Activated naive CD4-positive, alpha-beta T cell treated with anti-CD3 and anti-CD28 coated beads for 36 hours (primary cell): ENCODE measurements at regions of chr1 and their contacts with region 1.

Region 1: DNA sequence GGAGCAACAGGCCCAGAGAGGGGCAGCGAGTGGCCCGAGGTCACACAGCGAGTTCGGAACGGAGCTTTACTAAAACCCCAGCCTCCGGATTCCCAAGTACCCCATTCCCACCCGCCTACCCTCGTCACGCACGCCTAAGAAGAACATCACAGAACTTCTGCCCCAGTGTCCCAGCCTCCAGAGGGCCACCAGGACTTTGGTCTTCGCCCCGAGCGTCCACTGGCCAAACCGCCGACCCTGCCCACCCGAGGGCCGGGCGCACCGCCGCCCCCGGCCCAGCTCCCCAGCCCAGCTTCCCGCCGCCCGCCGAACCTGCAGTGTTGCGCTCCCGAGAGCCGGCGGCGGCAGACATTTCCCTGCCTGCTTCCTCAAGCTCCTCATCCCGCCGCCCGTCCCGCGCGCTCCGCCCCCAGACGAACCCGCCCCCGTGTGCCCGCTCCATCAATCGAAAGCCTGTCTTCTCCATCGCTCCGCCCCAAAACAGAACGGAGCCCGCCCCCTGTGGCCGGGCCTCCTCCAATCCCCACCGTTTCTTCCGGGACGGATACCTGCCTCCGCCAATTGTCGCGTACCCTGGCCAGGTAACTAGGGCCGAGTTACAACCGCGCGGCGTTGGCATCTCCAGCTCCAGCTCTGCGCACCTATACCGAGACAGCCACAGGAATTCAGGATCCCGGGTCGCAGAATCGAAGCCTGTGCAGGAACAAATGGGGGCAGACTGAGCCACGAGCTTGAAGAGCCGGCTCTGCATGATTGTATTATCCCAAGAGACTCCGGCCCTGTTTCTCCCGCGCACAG is 15.3 kb downstream of the INPP5B start:
- DNase-seq: peak; percentile 99
- H3K4me3 Mint-ChIP-seq: peak overlapping the region; percentile 93
- H3K27ac Mint-ChIP-seq: peak overlapping the region; percentile 65
- H3K4me1 Mint-ChIP-seq: peaks cover 46% of the 10 kb centered on the region
- H3K27me3 Mint-ChIP-seq: no peaks in the 10 kb centered on the region

Region 2: DNA sequence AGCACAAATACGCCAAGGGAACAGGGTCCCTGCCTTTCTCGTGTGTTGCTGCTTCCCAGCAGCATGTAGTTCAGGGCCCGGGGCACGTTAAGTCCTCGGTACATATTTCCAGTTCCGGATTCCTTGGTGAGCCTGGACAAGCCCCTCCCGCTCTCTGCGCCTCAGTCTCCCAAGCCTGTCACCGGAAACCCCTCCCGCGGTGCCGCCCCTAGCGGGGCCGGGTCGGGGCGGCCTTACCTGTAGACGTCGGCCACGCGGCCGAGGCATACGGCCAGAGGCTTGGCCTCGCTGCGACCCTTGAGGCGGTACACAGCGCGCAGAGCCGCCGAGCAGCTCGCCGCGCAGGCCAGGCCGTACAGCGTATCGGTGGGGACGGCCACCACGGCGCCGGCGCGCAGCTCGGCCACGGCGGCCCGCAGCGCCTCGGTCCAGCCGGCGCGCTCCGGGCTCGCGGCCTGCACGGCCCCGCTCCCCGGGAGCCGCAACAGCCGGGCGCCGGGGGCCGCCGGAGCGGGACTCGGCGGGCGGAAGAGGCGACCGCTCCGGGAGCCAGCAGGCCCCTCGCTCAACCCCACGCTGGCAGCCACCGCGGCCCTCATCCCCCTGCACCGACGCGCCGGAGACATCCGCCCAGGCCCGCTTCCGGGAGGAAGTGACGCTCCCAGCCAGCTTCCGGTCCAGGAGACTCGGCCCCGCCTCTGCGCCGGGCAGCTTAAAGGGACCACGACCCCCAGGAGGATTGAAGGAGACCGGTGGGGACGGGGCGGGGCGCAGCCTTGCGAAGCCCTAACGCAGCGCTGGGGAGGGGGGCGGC is 123.8 kb before region 1 on chr1 and contains the starts of genes C1orf122 and YRDC:
- CTCF ChIA-PET with region 1: no interaction called
- intact Hi-C with region 1: loop called (anchors 5 kb)
- DNase-seq: peak; percentile 92
- H3K4me3 Mint-ChIP-seq: peak within 1 kb of the TSS; percentile 95
- H3K27ac Mint-ChIP-seq: peak within 1 kb of the TSS; percentile 93
- H3K4me1 Mint-ChIP-seq: peaks cover 40% of the 10 kb centered on the region
- H3K27me3 Mint-ChIP-seq: no peaks in the 10 kb centered on the region
- total RNA-seq, gene C1orf122: 12.8 to 14.2 TPM
- total RNA-seq, gene YRDC: 31.6 to 31.7 TPM

Region 3: GRCh38 chr1:37946703-37947360 is 15.3 kb after region 1 on chr1 and contains the start of gene INPP5B:
- CTCF ChIA-PET with region 1: no interaction called
- intact Hi-C with region 1: loop called (anchors 2 kb)
- DNase-seq: peak; percentile 91
- H3K4me3 Mint-ChIP-seq: peak within 1 kb of the TSS; percentile 96
- H3K27ac Mint-ChIP-seq: peak within 1 kb of the TSS; percentile 96
- H3K4me1 Mint-ChIP-seq: peaks cover 14% of the 10 kb centered on the region
- H3K27me3 Mint-ChIP-seq: no peaks in the 10 kb centered on the region
- total RNA-seq, gene INPP5B: 30.4 to 31.2 TPM

Region 4: DNA sequence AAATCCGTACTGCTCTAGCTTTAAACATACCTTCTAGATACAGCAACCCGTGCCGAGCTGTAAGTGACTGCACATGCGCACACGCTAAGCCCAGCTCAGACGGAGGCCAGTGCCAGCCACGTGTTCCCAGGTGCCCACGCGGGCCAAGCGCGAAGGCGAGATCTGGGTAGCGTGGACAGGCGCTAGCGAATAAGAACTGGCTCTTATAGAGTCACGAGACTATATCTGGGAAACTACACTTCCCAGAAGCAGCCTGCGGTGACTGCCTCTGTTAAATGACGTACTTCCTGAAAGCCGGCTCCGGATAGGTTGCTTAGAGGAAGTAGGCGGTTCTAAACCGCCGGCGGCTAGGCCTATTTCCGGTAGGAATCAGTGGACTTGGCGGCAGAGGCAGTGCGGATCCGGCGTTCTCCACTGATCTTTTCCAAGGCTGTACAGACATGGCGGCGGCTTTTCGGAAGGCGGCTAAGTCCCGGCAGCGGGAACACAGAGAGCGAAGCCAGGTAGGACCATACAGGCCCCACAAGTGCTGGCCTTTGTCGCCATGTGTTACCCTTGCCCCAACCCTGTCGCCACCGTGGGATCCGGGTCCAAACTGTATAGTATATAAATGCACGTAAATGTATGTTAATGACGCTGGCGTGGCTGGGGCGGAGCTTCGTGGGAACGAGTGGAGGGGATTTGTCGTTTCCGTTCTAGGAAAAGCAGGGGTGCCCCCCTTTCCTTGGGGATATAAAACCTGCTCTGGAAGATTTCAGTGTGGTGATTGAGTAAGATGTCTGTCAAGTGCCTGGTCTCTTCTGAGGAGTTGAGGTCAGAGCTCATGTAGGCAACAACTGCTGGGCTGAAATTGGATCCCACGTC is 81.0 kb after region 1 on chr1 and contains the start of gene UTP11:
- CTCF ChIA-PET with region 1: no interaction called
- intact Hi-C with region 1: loop called (anchors 2 kb)
- DNase-seq: peak; percentile 96
- H3K4me3 Mint-ChIP-seq: peak within 1 kb of the TSS; percentile 98
- H3K27ac Mint-ChIP-seq: peak within 1 kb of the TSS; percentile 95
- H3K4me1 Mint-ChIP-seq: peaks cover 55% of the 10 kb centered on the region
- H3K27me3 Mint-ChIP-seq: no peaks in the 10 kb centered on the region
- total RNA-seq, gene UTP11: 49.7 to 49.8 TPM

Region 5: DNA sequence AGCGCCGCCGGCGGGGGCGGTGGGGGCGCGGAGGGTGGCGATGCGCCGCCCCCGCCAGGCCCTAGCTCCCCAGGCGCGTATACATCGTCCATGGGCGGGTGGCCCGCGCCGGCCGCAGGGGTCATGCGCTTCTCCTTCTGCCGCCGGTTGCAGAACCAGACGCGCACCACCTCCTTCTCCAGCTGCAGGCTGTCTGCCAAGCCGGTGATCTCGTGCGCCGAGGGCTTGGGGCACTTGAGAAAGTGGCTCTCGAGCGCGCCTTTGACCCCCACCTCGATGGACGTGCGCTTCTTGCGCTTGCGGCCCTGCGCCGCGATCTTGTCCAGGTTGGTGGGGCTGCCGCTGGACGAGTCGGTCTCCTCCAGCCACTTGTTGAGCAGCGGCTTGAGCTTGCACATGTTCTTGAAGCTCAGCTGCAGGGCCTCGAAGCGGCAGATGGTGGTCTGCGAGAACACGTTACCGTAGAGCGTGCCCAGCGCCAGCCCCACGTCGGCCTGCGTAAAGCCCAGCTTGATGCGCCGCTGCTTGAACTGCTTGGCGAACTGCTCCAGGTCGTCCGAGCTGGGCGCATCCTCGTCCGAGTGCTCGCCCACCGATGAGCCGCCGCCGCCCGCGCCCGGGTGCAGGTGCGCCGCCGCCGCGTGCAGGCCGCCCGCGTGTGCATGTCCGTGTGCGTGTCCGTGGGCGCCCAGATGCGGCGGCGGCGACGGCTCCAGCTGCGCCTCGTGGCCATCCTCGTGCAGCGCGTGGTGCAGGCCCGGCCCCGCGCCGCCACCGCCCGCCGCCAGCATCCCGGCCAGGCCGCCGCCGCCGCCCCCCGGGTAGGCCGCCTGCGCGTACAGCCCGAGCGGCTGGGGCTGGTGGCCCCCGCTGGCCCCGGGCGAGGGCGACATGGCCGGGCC is 114.1 kb after region 1 on chr1:
- CTCF ChIA-PET with region 1: no interaction called
- intact Hi-C with region 1: no loop called
- DNase-seq: no peak
- H3K4me3 Mint-ChIP-seq: peak overlapping the region; percentile 14
- H3K27ac Mint-ChIP-seq: no peak overlapping the region
- H3K4me1 Mint-ChIP-seq: peaks cover 9% of the 10 kb centered on the region
- H3K27me3 Mint-ChIP-seq: peaks cover 57% of the 10 kb centered on the region

Region 6: DNA sequence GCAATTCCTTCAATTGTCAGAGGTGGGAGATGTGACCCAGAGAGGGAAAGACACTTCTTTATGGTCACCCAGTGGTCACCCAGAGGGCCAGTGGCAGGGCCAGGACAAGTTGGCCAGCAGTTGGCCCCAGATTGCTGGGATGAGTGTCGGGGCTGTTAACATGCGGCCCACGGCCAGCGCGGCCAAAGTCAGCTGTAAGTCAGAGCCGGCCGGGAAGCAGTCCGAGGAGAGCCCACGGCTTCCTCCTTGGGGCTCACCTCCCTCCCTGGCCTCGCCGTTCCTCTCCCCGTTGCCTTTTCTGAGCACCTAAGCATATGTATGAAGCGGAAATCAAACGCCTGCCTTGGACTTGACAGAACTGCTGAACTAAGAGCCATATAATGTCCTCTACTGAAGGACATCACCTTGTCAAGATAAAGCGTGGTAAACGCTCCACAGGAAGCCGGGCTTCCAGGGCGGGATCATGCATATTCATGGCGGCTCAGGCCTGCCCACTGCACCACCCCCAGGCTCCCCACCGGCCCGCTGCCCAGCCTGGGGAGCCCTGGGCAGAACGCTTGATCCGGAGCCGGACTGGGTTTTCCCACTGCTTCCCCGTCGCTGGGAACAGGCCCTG is 360.5 kb after region 1 on chr1:
- CTCF ChIA-PET with region 1: no interaction called
- intact Hi-C with region 1: no loop called
- DNase-seq: no peak
- H3K4me3 Mint-ChIP-seq: no peak overlapping the region
- H3K27ac Mint-ChIP-seq: no peak overlapping the region
- H3K4me1 Mint-ChIP-seq: peaks cover 2% of the 10 kb centered on the region
- H3K27me3 Mint-ChIP-seq: peaks cover 36% of the 10 kb centered on the region

Region 7: DNA sequence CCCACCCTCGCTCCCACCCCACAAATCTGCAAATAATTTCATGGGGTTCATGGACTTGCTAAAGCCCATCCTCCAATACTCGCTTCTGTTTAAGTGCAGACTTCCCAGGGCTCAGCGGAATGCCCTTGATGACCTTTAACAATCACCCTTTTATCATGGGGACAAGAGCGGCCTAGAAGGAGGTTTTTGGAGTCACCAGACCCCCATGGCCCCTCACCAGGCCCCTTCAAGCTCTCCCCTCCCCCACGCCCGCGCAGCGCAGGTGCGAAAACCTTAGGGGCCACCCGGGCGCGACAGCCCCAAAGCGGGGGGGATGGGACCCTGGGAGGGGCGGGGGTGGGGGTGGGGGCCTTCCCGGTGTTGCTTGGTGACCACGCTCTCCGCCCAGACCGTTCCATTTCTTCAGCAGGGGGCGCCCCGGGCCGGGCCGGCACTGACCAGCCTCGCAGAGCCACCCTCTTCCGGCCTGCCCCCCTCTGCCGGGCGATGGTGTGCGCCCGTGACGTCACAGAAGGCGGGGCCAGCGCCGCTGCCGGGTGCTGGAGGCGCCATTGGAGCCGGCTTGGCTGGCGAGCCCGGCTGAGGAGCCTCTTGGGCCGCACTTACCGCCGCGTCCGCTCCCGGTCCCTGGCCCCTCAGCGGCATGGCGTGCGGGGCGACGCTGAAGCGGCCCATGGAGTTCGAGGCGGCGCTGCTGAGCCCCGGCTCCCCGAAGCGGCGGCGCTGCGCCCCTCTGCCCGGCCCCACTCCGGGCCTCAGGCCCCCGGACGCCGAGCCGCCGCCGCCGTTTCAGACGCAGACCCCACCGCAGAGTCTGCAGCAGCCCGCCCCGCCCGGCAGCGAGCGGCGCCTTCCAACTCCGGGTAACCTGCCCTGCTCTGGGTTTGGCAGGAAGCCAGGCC is 1059.4 kb after region 1 on chr1 and contains the start of gene AKIRIN1:
- CTCF ChIA-PET with region 1: no interaction called
- intact Hi-C with region 1: loop called (anchors 5 kb)
- DNase-seq: peak; percentile 97
- H3K4me3 Mint-ChIP-seq: peak within 1 kb of the TSS; percentile 80
- H3K27ac Mint-ChIP-seq: peak within 1 kb of the TSS; percentile 84
- H3K4me1 Mint-ChIP-seq: peaks cover 52% of the 10 kb centered on the region
- H3K27me3 Mint-ChIP-seq: no peaks in the 10 kb centered on the region
- total RNA-seq, gene AKIRIN1: 58.1 to 58.5 TPM